HCT116 (cell line): ENCODE measurements at regions of chr4 and their contacts with region 1.

Region 1: DNA sequence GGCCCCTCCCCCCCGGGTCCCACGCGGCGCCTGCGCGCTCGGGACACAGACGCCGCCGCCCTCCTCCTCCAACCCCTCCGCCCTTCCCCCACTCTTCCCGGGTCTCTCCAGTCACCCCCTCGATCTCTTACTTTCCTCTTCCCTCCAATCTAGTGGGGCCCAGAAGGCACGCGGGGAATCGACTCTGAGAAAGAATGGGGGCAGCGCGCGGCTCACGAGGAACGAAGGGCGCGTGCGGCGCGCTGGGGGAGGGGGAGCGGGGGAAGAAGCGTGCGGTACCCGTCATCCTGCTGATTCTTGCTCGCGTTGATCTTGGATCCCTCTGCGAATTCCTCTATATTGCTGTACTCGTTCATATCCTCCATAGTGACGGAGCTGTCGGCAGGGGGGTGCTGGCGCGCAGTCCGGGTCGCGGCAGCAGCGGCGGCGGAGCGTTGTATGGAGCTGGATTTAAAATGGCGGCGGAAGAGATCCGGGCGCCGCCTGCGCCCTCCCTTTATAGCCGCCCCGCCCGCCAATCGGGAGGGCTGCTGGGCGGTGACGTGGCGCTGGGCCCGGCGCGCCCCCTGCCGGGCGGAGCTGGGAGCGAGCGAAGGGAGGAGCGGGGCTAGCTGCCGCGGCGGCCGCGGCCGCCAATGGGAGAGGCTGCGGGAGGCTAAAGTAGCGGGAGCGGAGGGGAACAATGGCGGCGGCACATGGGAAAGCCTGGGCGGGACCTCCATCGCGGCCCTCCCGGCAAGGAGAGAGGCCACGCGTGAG is 1.1 kb downstream of the HNRNPDL start:
- DNase-seq: peak; percentile 76
- ATAC-seq: peak; percentile 65
- H3K4me3 ChIP-seq: peak overlapping the region; percentile 95 to 98
- H3K27ac ChIP-seq: peak overlapping the region; percentile 93
- H3K4me1 ChIP-seq: peaks cover 10 to 38% of the 10 kb centered on the region in 2 experiments; a peak in 3 of 4 replicates
- H3K27me3 ChIP-seq: no peaks in the 10 kb centered on the region
- CTCF ChIP-seq: peak in 2 of 3 experiments; percentile 75 to 88; a peak in 4 of 6 replicates
- POLR2A ChIP-seq: peak; percentile 85
- RAD21 ChIP-seq: no peak

Region 2: DNA sequence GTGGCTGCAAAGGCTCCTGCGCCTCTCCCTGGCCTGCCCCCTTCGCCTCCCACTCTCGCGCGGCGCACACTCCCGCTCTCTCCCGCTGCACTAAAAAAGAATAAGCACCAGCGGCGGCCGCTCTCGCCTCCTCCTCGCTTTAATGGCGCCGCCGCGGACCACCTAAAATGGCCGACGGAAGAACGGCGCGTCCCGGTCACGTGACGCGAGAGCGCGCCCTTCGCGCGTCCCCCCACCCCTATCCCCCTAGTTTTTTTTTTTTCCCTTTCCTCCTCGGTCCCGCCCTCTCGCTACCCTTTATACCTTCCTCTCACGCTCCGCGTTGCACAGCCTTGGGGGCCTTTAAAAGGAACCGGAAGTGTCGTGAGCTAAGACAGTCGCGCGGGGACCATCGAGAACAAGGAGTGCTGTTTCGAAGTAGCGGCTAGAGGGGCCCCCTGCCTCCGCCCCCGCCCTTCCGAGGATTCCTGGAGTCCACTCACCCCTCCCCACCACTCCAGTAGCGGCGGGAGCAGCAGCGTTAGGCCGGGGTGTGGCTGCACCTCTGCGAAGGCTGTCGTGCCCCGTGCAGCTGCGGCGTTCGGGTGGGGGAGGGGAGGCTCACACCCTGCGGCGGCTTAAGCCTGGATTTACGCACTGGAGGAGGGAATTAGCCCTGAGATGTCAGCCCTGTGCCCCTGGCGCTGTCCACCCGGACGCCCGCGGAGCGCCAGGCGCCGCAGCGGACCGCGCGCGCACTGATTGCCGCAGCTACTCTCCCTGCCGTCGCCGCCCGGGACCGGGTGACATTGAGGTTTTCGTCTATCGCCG is 55.1 kb before region 1 on chr4 and contains the start of gene HNRNPD:
- CTCF ChIA-PET with region 1: interaction called, 3 read pairs
- POLR2A ChIA-PET with region 1: interaction called, 39 read pairs
- RAD21 ChIA-PET with region 1: interaction called, 3 to 4 read pairs
- intact Hi-C with region 1: loop called (anchors 1 kb)
- DNase-seq: peak; percentile 100
- ATAC-seq: peak; percentile 89
- H3K4me3 ChIP-seq: peak within 1 kb of the TSS; percentile 78 to 84
- H3K27ac ChIP-seq: peak within 1 kb of the TSS; percentile 99
- H3K4me1 ChIP-seq: peaks cover 11 to 26% of the 10 kb centered on the region in 2 experiments
- H3K27me3 ChIP-seq: no peaks in the 10 kb centered on the region
- CTCF ChIP-seq: no peak
- POLR2A ChIP-seq: peak; percentile 59
- RAD21 ChIP-seq: no peak
- total RNA-seq, gene HNRNPD: 357 TPM

Region 3: GRCh38 chr4:82379964-82380733 is 49.0 kb before region 1 on chr4:
- CTCF ChIA-PET with region 1: interaction called, 5 read pairs
- POLR2A ChIA-PET with region 1: interaction called, 39 read pairs
- RAD21 ChIA-PET with region 1: no interaction called
- intact Hi-C with region 1: no loop called
- DNase-seq: peak; percentile 53
- ATAC-seq: peak; percentile 89
- H3K4me3 ChIP-seq: no peak overlapping the region
- H3K27ac ChIP-seq: peak overlapping the region; percentile 31; the same call in 1 of the 2 replicates
- H3K4me1 ChIP-seq: peaks cover 14 to 26% of the 10 kb centered on the region in 2 experiments
- H3K27me3 ChIP-seq: no peaks in the 10 kb centered on the region
- CTCF ChIP-seq: peak in 1 of 3 experiments; percentile 24; a peak in 1 of 6 replicates
- POLR2A ChIP-seq: no peak
- RAD21 ChIP-seq: no peak

Region 4: DNA sequence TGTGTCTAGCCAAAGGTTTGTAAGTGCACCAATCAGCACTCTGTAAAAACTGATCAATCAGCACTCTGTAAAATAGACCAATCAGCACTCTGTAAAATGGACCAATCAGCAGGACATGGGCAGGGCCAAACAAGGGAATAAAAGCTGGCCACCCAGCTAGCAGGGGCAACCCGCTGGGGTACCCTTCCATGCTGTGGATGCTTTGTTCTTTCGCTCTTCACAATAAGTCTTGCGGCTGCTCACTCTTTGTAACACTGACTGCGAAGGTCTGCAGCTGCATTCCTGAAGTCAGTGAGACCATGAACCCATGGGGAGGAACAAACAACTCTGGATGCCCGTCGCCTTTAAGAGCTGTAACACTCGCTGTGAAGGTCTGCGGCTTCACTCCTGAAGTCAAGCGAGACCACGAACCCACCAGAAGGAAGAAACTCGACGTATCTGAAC is 13.2 kb before region 1 on chr4:
- CTCF ChIA-PET with region 1: interaction called, 3 read pairs
- POLR2A ChIA-PET with region 1: interaction called, 14 read pairs
- RAD21 ChIA-PET with region 1: no interaction called
- intact Hi-C with region 1: no loop called
- DNase-seq: no peak
- ATAC-seq: no peak
- H3K4me3 ChIP-seq: no peak overlapping the region
- H3K27ac ChIP-seq: no peak overlapping the region
- H3K4me1 ChIP-seq: peaks cover under 1% of the 10 kb centered on the region in 2 experiments; a peak in 2 of 4 replicates
- H3K27me3 ChIP-seq: no peaks in the 10 kb centered on the region
- CTCF ChIP-seq: no peak
- POLR2A ChIP-seq: no peak
- RAD21 ChIP-seq: no peak

Region 5: GRCh38 chr4:82652062-82652461 is 222.9 kb after region 1 on chr4:
- CTCF ChIA-PET with region 1: no interaction called
- POLR2A ChIA-PET with region 1: no interaction called
- RAD21 ChIA-PET with region 1: no interaction called
- intact Hi-C with region 1: no loop called
- DNase-seq: no peak
- ATAC-seq: no peak
- H3K4me3 ChIP-seq: no peak overlapping the region
- H3K27ac ChIP-seq: no peak overlapping the region
- H3K4me1 ChIP-seq: no peaks in the 10 kb centered on the region
- H3K27me3 ChIP-seq: no peaks in the 10 kb centered on the region
- CTCF ChIP-seq: no peak
- POLR2A ChIP-seq: no peak
- RAD21 ChIP-seq: no peak